Activated B cell treated with CpG ODN at 0.5 μM for 24 hours (primary cell): ENCODE measurements at regions of chr7 and their contacts with region 1.

Region 1: DNA sequence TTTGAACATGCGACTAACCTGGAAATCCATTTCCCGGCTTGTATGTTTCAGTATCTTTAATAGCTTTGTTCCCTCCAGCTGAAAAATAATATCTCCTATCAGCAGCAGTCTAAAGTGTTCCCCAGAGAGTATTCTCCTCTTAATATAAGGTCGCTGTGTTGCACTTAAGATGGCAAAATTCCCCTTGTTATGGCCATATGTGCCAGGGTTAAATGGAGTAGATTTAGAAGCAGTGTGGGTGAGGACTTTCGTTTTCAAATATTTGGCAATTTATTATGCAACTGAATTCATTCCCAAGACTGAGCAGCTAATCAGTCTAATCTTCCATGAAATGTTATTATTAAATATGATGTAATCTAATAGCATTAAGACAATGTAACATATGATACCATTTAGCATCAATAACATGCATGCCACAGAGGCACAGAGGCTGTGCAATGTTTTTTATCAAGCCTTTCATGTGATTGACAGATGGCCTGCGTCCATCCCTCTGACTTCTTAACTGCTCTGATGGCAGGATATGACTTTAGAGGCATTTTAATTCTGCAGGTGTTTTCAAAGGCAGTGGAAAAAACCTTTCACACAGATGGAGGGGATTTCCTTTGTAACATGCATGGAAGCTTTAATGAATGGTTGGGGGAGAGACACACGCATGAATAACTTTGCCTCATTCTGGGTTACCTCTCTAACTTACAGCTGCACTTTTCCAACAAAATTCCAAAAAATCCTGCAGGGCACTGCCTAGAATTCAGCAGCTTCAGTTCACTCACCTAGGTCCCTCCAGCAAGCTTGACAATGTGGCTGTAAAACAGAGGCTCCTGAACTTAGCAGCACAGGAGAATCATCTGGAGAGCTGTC is 55.1 kb upstream of the ZPBP start:
- DNase-seq: no peak
- ATAC-seq: peak; percentile 77
- H3K4me3 Mint-ChIP-seq: peak overlapping the region; percentile 46
- H3K27ac Mint-ChIP-seq: peak overlapping the region; percentile 95
- H3K4me1 Mint-ChIP-seq: peaks cover 93% of the 10 kb centered on the region
- H3K27me3 Mint-ChIP-seq: no peaks in the 10 kb centered on the region
- CTCF ChIP-seq: no peak

Region 2: GRCh38 chr7:50166997-50167965 is 19.1 kb after region 1 on chr7:
- CTCF ChIA-PET with region 1: interaction called, 4 read pairs
- POLR2A ChIA-PET with region 1: interaction called, 11 read pairs
- intact Hi-C with region 1: loop called (anchors 1 kb)
- DNase-seq: no peak
- ATAC-seq: peak; percentile 91
- H3K4me3 Mint-ChIP-seq: peak overlapping the region; percentile 20
- H3K27ac Mint-ChIP-seq: peak overlapping the region; percentile 69
- H3K4me1 Mint-ChIP-seq: peaks cover 52% of the 10 kb centered on the region
- H3K27me3 Mint-ChIP-seq: no peaks in the 10 kb centered on the region
- CTCF ChIP-seq: no peak

Region 3: GRCh38 chr7:50197549-50197948 is 49.4 kb after region 1 on chr7:
- CTCF ChIA-PET with region 1: no interaction called
- POLR2A ChIA-PET with region 1: interaction called, 4 read pairs
- intact Hi-C with region 1: loop called (anchors 1 kb)
- DNase-seq: no peak
- ATAC-seq: peak; percentile 98
- H3K4me3 Mint-ChIP-seq: no peak overlapping the region
- H3K27ac Mint-ChIP-seq: peak overlapping the region; percentile 78
- H3K4me1 Mint-ChIP-seq: peaks cover 24% of the 10 kb centered on the region
- H3K27me3 Mint-ChIP-seq: no peaks in the 10 kb centered on the region
- CTCF ChIP-seq: no peak

Region 4: DNA sequence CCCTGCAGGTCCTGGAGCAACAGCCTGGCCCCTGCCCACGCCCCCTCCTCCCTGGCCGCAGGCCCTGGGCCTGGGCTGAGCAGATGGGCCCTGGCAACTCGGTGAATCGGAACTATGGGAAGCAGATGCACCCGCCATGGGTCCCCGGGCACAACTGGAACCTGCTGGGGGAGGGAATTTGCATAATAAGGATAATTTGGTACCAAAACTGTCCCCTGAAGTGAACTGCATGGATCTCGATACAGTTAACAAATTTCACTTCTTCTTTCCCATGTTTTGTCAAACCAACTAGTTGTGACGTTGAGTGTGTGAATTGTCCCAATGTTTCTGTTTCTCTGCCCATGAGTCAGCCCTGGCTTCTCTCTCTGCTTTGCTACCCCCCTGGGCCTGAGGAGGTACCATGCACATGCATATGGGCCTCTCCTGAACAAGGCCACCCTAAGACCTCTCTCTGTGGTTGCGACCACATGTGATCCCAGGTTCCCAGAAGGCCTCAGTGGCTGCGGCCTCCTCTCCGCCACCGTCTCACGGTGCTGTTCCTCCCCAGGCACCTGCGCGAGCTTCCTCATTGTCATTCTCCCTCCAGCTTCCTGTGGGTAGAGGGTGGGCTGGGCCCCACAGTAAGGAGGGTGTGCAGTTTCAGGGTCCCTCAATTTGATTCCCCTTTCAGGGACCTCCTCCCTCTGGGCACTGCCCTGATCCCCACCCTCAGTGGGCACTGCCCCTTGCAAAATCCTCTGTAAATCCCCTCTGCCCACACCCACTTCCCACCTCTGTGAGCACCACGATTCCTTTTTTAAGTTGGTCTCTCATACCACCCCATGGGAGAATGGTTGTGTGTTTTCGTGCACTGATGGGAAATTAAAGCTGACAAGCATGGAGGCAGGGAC is 261.9 kb after region 1 on chr7:
- CTCF ChIA-PET with region 1: interaction called, 5 read pairs
- POLR2A ChIA-PET with region 1: interaction called, 25 read pairs
- intact Hi-C with region 1: loop called (anchors 1 kb)
- DNase-seq: peak; percentile 58
- ATAC-seq: peak; percentile 70
- H3K4me3 Mint-ChIP-seq: peak overlapping the region; percentile 56
- H3K27ac Mint-ChIP-seq: peak overlapping the region; percentile 94
- H3K4me1 Mint-ChIP-seq: peaks cover 98% of the 10 kb centered on the region
- H3K27me3 Mint-ChIP-seq: no peaks in the 10 kb centered on the region
- CTCF ChIP-seq: no peak

Region 5: DNA sequence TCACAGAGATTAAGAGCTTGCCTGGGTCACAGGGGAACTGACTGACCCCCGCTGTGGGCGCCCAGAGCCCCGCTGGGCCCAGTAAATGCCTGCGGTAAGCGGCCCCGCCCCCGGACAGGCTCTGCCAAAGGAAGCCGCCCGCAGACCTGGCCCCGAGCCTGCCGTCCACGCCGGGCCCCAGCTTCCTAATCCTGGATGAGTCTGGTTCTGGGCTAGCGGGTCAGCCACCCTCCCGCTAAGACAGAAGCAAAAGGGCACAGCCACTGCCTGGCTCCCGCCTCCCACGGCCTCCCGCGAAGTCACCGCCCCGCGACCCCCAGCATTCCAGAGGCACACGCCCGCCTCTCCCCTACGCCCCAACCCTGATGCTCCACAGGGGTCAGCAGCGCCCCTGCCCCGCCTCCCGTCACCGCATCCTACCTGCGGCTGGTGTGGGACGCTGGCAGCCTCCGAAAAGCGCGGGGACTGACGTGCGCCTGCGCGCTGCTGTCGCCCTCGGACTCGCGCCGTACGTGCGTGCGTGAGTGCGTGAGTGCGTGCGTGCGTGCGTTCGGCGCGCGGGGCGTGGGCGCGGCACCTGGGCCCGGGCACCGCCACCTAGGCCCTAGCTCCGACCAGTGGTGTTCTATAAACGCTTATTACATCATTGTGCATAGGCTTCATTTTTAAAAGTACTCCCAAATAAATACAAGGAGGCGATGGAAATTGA is 301.9 kb after region 1 on chr7 and contains the start of gene FIGNL1:
- CTCF ChIA-PET with region 1: interaction called, 5 read pairs
- POLR2A ChIA-PET with region 1: no interaction called
- intact Hi-C with region 1: loop called (anchors 1 kb)
- DNase-seq: peak; percentile 82
- ATAC-seq: peak; percentile 97
- H3K4me3 Mint-ChIP-seq: peak within 1 kb of the TSS; percentile 91
- H3K27ac Mint-ChIP-seq: peak within 1 kb of the TSS; percentile 89
- H3K4me1 Mint-ChIP-seq: peaks cover 24% of the 10 kb centered on the region
- H3K27me3 Mint-ChIP-seq: no peaks in the 10 kb centered on the region
- CTCF ChIP-seq: no peak
- total RNA-seq, gene FIGNL1: 13.2 and 15.4 TPM in 2 replicates